B cell (primary cell): ENCODE measurements at regions of chr6 and their contacts with region 1.

Region 1: DNA sequence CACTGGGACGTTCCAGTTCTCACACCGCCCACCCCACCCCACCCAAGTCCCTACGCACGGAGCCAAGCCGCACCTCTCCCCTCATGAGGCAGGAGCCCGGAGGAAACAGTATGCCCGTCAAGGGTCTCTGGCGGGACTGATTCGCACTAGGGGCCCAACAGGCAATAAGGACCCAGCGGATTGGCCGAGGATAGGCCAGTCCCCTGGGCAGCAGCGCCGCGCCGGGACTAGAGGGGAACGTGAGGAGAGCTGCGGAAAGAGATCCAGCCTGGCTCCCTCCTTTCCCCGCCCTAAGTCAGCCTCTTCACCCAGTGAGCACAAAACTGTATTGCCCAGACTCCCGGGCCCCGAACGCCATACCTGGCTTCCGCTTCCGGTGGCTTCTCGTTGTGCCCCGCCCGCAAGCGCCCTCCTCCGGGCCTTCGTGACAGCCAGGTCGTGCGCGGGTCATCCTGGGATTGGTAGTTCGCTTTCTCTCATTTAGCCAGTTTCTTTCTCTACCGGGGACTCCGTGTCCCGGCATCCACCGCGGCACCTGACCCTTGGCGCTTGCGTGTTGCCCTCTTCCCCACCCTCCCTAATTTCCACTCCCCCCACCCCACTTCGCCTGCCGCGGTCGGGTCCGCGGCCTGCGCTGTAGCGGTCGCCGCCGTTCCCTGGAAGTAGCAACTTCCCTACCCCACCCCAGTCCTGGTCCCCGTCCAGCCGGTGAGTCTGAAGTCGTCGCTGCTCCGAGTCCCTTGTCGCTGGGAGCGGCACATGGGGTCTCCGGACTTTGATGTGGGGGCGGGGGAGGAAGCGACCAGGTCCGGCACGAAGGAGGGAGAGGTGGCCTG is at the start of gene CSNK2B:
- DNase-seq: peak; percentile 98
- ATAC-seq: peak; percentile 87
- H3K4me3 ChIP-seq: peak within 1 kb of the TSS; percentile 58 to 98 (median 85)
- H3K4me3 Mint-ChIP-seq: peak within 1 kb of the TSS; percentile 96
- H3K27ac ChIP-seq: peak within 1 kb of the TSS; percentile 96 to 98
- H3K27ac Mint-ChIP-seq: peak within 1 kb of the TSS; percentile 100
- H3K4me1 ChIP-seq: peaks cover 27 to 47% of the 10 kb centered on the region in 2 donors
- H3K4me1 Mint-ChIP-seq: peaks cover 53% of the 10 kb centered on the region
- H3K27me3 ChIP-seq: no peaks in the 10 kb centered on the region
- H3K27me3 Mint-ChIP-seq: no peaks in the 10 kb centered on the region
- CTCF ChIP-seq: no peak
- total RNA-seq, gene CSNK2B: 141 and 146 TPM in 2 replicates

Region 2: GRCh38 chr6:31407699-31408098 is 258.0 kb before region 1 on chr6:
- CTCF ChIA-PET with region 1: no interaction called
- POLR2A ChIA-PET with region 1: no interaction called
- intact Hi-C with region 1: no loop called
- DNase-seq: no peak
- ATAC-seq: no peak
- H3K4me3 ChIP-seq: no peak overlapping the region
- H3K4me3 Mint-ChIP-seq: no peak overlapping the region
- H3K27ac ChIP-seq: no peak overlapping the region
- H3K27ac Mint-ChIP-seq: no peak overlapping the region
- H3K4me1 ChIP-seq: peaks cover 11 to 18% of the 10 kb centered on the region in 2 donors
- H3K4me1 Mint-ChIP-seq: peaks cover 50% of the 10 kb centered on the region
- H3K27me3 ChIP-seq: no peaks in the 10 kb centered on the region
- H3K27me3 Mint-ChIP-seq: no peaks in the 10 kb centered on the region
- CTCF ChIP-seq: no peak

Region 3: DNA sequence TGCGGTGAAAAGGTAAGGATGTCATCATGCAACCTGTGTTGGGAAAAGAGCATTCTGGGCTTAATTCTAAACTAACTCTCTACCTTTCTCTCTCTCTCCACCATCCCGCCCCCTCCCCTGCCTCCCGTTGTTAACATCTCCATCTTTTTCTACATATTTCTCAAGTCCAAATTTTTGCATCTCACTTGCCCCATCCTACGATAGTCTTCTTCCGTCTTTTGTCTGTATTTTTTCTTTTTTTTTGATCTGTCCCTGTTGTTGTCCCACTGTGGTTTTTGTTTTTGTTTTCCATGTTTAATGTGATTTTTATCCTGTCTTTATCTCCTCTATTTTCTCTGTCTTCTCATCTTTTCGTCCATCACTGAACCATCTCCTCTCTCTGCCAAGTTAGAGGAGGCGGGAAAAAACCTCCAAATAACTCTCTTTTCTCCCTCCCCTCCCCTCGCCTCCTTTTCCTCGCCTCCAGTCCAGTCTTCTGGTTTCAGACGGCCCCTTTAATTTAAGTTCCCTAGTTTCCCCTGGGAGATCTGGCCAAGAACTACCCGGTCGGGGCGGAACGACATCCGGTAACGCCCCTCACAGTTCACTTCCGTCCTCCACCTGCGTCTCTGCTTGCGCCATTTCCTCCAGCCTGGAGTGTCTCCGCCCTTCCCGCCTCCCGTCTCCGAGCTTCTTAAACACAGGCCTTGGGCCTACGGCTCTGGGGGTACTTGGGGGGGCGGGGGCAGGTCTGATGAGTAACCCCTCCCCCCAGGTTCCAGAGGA is 118.6 kb before region 1 on chr6 and contains the start of gene NFKBIL1:
- CTCF ChIA-PET with region 1: interaction called, 7 read pairs
- POLR2A ChIA-PET with region 1: interaction called, 4 read pairs
- intact Hi-C with region 1: loop called (anchors 1 kb)
- DNase-seq: peak; percentile 96
- ATAC-seq: peak; percentile 84
- H3K4me3 ChIP-seq: peak within 1 kb of the TSS; percentile 40 to 69 (median 56)
- H3K4me3 Mint-ChIP-seq: peak within 1 kb of the TSS; percentile 87
- H3K27ac ChIP-seq: peak within 1 kb of the TSS; percentile 80 to 83
- H3K27ac Mint-ChIP-seq: peak within 1 kb of the TSS; percentile 88
- H3K4me1 ChIP-seq: peaks cover 30 to 53% of the 10 kb centered on the region in 2 donors
- H3K4me1 Mint-ChIP-seq: peaks cover 48% of the 10 kb centered on the region
- H3K27me3 ChIP-seq: no peaks in the 10 kb centered on the region
- H3K27me3 Mint-ChIP-seq: no peaks in the 10 kb centered on the region
- CTCF ChIP-seq: peak; percentile 50
- total RNA-seq, gene NFKBIL1: 17.8 and 18.4 TPM in 2 replicates

Region 4: GRCh38 chr6:31702819-31703522 is 37.3 kb after region 1 on chr6 and contains the start of gene ABHD16A:
- CTCF ChIA-PET with region 1: no interaction called
- POLR2A ChIA-PET with region 1: no interaction called
- intact Hi-C with region 1: loop called (anchors 5 kb)
- DNase-seq: peak; percentile 99
- ATAC-seq: peak; percentile 95
- H3K4me3 ChIP-seq: peak within 1 kb of the TSS; percentile 65 to 98 (median 96)
- H3K4me3 Mint-ChIP-seq: peak within 1 kb of the TSS; percentile 98
- H3K27ac ChIP-seq: peak within 1 kb of the TSS; percentile 87 to 93
- H3K27ac Mint-ChIP-seq: peak within 1 kb of the TSS; percentile 91
- H3K4me1 ChIP-seq: peaks cover 20 to 28% of the 10 kb centered on the region in 2 donors
- H3K4me1 Mint-ChIP-seq: peaks cover 32% of the 10 kb centered on the region
- H3K27me3 ChIP-seq: no peaks in the 10 kb centered on the region
- H3K27me3 Mint-ChIP-seq: no peaks in the 10 kb centered on the region
- CTCF ChIP-seq: no peak
- total RNA-seq, gene ABHD16A: 78.3 and 90.3 TPM in 2 replicates

Region 5: GRCh38 chr6:31806465-31807272 is 140.9 kb after region 1 on chr6 and contains the start of gene LSM2:
- CTCF ChIA-PET with region 1: no interaction called
- POLR2A ChIA-PET with region 1: no interaction called
- intact Hi-C with region 1: loop called (anchors 1 kb)
- DNase-seq: peak; percentile 97
- ATAC-seq: peak; percentile 98
- H3K4me3 ChIP-seq: peak within 1 kb of the TSS; percentile 68 to 84 (median 84)
- H3K4me3 Mint-ChIP-seq: peak within 1 kb of the TSS; percentile 87
- H3K27ac ChIP-seq: peak within 1 kb of the TSS; percentile 77 to 93
- H3K27ac Mint-ChIP-seq: peak within 1 kb of the TSS; percentile 88
- H3K4me1 ChIP-seq: peaks cover 8 to 11% of the 10 kb centered on the region in 2 donors
- H3K4me1 Mint-ChIP-seq: peaks cover 16% of the 10 kb centered on the region
- H3K27me3 ChIP-seq: no peaks in the 10 kb centered on the region
- H3K27me3 Mint-ChIP-seq: no peaks in the 10 kb centered on the region
- CTCF ChIP-seq: peak; percentile 34
- total RNA-seq, gene LSM2: 45.3 and 52.4 TPM in 2 replicates

Region 6: DNA sequence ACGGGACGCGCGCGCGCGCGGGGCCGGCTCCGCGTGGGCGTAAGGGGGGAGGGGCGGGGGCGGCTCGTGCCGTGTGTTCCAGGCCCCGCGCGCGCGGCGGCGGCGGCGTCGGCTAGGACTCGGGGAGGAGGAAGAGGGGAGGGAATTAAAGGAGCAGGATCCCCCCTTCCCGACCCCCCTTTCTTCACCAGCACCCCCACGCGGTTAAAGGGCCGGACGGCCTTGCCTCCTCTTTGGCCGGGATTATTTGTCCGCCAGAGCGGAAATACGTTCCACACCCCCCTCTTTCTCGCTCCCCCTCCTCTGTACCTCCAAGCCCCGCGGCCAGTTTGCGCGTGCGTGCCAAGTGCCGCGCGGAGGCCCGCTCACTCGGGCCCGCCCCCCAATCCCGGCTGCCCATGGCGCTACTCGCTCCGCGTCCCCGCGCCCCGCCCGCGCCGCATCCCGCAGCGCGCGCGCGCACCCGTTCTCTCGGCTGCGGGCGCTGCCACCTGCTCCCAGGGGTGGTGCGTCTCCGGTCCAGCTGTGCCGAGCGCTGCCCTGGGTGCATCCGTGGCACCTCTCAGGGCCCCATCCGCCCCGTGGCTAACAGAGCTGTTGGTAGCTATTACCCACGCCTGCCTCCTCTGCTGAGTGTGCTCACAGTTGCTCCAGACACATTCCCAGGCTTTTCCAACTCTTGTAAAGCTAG is 236.4 kb after region 1 on chr6 and contains the start of gene ZBTB12:
- CTCF ChIA-PET with region 1: no interaction called
- POLR2A ChIA-PET with region 1: interaction called, 6 read pairs
- intact Hi-C with region 1: loop called (anchors 1 kb)
- DNase-seq: peak; percentile 93
- ATAC-seq: peak; percentile 64
- H3K4me3 ChIP-seq: peak within 1 kb of the TSS; percentile 27 to 82 (median 77)
- H3K4me3 Mint-ChIP-seq: peak within 1 kb of the TSS; percentile 94
- H3K27ac ChIP-seq: peak within 1 kb of the TSS; percentile 76 to 79
- H3K27ac Mint-ChIP-seq: peak within 1 kb of the TSS; percentile 93
- H3K4me1 ChIP-seq: peaks cover 13 to 23% of the 10 kb centered on the region in 2 donors
- H3K4me1 Mint-ChIP-seq: peaks cover 32% of the 10 kb centered on the region
- H3K27me3 ChIP-seq: no peaks in the 10 kb centered on the region
- H3K27me3 Mint-ChIP-seq: no peaks in the 10 kb centered on the region
- CTCF ChIP-seq: no peak
- total RNA-seq, gene ZBTB12: 8.1 and 8.9 TPM in 2 replicates

Region 7: DNA sequence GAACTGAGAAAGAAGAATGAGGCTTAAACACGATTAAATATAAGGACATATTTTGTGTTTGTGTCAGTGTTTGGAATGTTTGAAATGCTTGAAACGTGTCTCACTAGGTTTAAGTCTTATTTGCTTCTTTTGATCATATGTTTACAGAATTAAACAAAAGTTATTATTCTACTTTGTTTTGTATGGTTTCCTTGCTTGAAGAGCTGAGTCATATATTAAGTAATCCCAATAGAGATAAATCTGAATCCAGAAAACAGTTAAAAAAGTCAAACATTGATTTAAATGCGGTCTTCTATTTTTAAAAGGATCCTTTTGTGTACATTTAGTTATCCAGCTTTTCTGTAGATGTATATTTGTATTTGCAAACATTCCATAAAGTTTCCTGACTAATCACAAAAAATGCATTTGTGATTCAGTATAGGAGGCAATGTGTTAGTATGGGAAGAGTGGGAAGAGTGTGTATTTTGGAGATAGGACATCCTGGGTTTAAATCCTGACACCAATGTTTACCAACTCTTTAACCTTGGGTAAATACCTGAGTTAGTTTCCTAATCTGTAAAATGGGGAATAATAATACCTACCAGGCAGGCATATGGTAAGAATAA is 633.0 kb after region 1 on chr6:
- CTCF ChIA-PET with region 1: no interaction called
- POLR2A ChIA-PET with region 1: no interaction called
- intact Hi-C with region 1: no loop called
- DNase-seq: no peak
- ATAC-seq: no peak
- H3K4me3 ChIP-seq: no peak overlapping the region
- H3K4me3 Mint-ChIP-seq: no peak overlapping the region
- H3K27ac ChIP-seq: no peak overlapping the region
- H3K27ac Mint-ChIP-seq: no peak overlapping the region
- H3K4me1 ChIP-seq: no peaks in the 10 kb centered on the region
- H3K4me1 Mint-ChIP-seq: peaks cover under 1% of the 10 kb centered on the region
- H3K27me3 ChIP-seq: no peaks in the 10 kb centered on the region
- H3K27me3 Mint-ChIP-seq: no peaks in the 10 kb centered on the region
- CTCF ChIP-seq: no peak